A673 (cell line): ENCODE measurements at regions of chr12 and their contacts with region 1.

Region 1: GRCh38 chr12:49776413-49776812 is 35.1 kb downstream of the TMBIM6 start:
- DNase-seq: peak; percentile 77
- H3K4me3 ChIP-seq: no peak overlapping the region
- H3K27ac ChIP-seq: no peak overlapping the region
- H3K4me1 ChIP-seq: peaks cover 5% of the 10 kb centered on the region
- H3K27me3 ChIP-seq: no peaks in the 10 kb centered on the region
- CTCF ChIP-seq: peak; percentile 83

Region 2: GRCh38 chr12:48977315-48978281 is 798.8 kb before region 1 on chr12:
- CTCF ChIA-PET with region 1: no interaction called
- POLR2A ChIA-PET with region 1: no interaction called
- intact Hi-C with region 1: no loop called
- DNase-seq: peak; percentile 71
- H3K4me3 ChIP-seq: peak overlapping the region; percentile 32
- H3K27ac ChIP-seq: no peak overlapping the region
- H3K4me1 ChIP-seq: peaks cover 32% of the 10 kb centered on the region
- H3K27me3 ChIP-seq: peaks cover 69% of the 10 kb centered on the region
- CTCF ChIP-seq: peak; percentile 81

Region 3: DNA sequence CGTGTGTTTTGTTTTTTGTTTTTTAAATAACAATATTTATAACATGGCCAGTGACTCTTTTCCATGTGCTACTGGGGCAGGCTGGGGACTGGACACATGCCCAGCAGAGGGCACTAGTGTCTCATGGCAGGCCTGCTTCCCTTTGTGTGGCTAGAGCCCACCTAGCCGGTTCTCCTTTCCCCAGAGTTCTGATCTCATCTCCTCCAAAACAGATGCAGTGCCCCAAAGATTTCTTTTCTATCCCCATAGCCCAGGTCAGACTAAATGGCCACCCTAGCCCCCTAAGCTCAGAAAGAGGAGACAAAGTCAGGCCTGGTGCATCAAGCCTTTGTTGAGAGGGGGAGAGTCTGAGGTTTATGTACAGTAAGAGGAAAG is 131.8 kb before region 1 on chr12:
- CTCF ChIA-PET with region 1: no interaction called
- POLR2A ChIA-PET with region 1: no interaction called
- intact Hi-C with region 1: loop called (anchors 2 kb)
- DNase-seq: peak; percentile 81
- H3K4me3 ChIP-seq: no peak overlapping the region
- H3K27ac ChIP-seq: no peak overlapping the region
- H3K4me1 ChIP-seq: peaks cover 9% of the 10 kb centered on the region
- H3K27me3 ChIP-seq: no peaks in the 10 kb centered on the region
- CTCF ChIP-seq: peak; percentile 91

Region 4: DNA sequence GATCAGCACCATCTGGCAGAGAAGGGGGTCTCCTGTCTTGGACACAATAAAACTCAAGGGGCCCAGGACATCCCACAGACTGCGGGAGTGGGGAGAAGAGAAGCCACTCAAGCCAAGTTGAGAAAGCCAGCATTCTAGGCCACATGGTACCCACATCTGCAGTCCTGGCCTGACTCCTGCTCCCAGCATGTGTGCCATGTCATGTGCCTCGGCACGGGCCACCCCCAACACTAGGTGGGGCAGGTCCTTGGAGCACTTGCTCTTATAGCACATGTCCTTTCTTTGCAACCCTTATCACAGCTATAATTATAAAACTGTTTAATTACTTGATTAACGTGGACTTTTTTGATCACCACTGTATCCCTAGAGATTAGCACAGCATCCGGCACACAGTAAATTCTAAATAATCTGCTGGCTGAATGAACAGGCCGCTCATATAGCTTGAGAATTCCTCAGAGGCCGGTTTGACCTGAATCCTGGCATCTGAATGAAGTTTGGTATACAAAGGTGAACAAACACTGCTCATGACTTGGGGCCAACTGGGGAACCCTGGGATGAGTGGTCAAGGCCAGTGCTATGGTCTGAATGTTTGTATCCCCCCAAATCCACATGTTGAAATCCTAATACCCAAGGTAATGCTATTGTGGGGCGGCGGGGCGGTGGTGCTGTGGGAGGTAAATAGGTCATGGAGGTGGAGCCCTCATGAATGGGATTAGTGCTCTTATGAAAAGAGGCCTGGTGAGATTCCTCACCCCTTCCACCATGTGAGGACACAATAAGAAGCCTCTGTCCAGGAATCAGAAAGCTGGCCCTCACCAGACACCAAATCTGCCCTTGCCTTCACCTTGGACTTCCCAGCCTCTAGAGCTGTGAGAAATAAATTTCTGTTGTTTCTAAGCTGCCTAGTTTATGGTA is 45.2 kb after region 1 on chr12:
- CTCF ChIA-PET with region 1: no interaction called
- POLR2A ChIA-PET with region 1: no interaction called
- intact Hi-C with region 1: no loop called
- DNase-seq: no peak
- H3K4me3 ChIP-seq: no peak overlapping the region
- H3K27ac ChIP-seq: no peak overlapping the region
- H3K4me1 ChIP-seq: peaks cover 9% of the 10 kb centered on the region
- H3K27me3 ChIP-seq: no peaks in the 10 kb centered on the region
- CTCF ChIP-seq: no peak

Region 5: DNA sequence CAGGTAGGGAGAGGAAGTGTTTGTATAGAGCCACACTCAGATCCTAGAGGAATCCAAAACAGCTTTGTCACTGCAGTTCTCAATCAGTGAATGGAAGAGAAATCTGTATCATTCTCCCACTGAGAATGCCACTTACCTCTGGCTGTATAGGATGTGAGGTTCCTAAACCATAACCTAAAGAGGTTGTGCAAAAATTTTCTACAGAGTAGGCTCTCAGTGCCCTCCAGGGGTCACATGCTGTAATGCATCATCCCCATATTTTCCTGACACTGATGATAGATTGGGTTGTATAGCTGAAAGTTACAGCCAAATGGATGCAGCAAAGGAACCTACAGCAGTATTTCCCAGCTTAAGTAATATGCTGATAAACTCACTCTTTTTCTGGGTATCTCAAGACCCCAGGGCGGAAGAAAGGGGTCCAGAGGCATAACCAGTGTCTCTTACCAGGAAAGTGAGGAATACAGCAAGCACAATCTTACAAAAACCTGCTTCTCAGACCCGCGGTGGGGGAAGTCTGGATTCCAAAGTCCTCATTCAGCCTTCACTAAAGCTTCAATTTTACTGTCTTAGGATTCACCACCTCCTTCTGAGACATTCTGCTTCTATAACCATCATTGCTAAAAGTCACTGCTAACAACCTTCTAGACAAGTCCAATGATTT is 62.7 kb after region 1 on chr12:
- CTCF ChIA-PET with region 1: no interaction called
- POLR2A ChIA-PET with region 1: no interaction called
- intact Hi-C with region 1: loop called (anchors 1 kb)
- DNase-seq: peak; percentile 67
- H3K4me3 ChIP-seq: no peak overlapping the region
- H3K27ac ChIP-seq: no peak overlapping the region
- H3K4me1 ChIP-seq: peaks cover 15% of the 10 kb centered on the region
- H3K27me3 ChIP-seq: no peaks in the 10 kb centered on the region
- CTCF ChIP-seq: peak; percentile 76

Region 6: DNA sequence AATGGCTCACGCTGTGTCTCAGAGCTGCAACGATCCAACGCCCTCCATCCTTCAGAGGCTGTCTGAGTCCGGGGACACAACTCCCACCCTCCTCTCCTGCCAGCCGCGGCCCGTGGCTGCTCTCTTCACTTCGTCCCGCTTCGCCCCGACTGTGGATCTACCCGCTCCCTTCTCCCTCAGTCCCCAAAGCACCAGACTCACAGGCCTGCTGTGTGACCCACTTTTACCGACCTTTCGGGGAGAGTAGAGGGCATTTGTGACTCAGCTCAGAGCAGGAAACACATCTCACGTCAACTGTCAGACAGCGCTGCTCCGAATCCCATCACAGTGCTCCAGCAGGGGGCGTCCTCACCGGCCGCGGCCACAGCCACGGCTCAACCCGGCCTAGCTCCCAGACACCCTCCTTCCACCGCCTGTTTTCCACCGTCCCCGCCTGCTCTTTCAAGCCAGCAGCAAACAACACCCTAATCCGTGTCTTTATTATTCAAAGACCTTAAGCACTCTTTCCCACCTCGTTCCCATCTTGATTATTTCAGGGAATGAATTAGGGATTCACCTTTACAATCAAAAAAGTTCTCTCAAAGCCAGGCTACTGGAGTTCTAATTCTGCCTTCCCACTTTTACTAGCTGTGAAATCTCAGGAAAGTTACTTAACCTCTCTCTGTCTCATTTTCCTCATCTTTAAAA is 169.1 kb after region 1 on chr12:
- CTCF ChIA-PET with region 1: interaction called, 3 read pairs
- POLR2A ChIA-PET with region 1: no interaction called
- intact Hi-C with region 1: loop called (anchors 10 kb)
- DNase-seq: peak; percentile 82
- H3K4me3 ChIP-seq: peak overlapping the region; percentile 30
- H3K27ac ChIP-seq: no peak overlapping the region
- H3K4me1 ChIP-seq: no peaks in the 10 kb centered on the region
- H3K27me3 ChIP-seq: no peaks in the 10 kb centered on the region
- CTCF ChIP-seq: peak; percentile 97

Region 7: DNA sequence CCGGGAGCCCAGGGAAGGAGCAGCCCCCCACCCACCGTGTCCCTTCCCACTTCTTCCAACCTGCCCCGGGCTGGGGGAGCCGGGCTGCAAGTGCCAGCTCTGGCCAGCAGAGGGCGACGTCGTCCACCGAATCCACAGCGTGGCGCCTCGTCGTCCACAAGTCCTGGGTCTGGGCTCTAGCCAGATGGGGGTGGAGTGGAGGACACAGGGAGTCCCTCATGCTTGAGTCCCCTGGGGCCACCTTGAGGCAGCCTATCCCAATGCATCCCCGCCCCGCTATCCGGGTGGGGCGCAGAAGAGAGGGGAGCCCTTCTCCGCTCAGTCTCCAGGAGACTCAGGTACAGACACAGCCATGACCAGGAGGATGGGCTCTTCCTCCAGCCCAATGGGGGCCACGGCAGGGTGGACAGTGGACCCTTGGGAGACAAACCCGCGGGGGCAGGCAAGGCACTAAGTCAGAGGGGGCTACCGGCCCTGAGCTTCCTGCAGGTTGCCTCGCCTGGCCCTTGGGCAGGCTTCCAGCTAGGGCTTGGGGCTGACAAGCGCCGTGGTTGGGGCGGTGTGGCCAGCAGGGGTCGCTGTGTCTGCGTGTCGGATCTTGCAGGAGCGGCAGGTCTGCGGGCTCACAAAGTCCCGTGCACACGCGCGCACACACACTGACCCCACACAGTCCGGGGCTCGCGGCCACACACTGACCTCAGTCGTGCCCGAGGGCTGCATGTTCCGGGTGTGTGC is 190.8 kb after region 1 on chr12:
- CTCF ChIA-PET with region 1: no interaction called
- POLR2A ChIA-PET with region 1: no interaction called
- intact Hi-C with region 1: loop called (anchors 5 kb)
- DNase-seq: peak; percentile 94
- H3K4me3 ChIP-seq: peak overlapping the region; percentile 47
- H3K27ac ChIP-seq: no peak overlapping the region
- H3K4me1 ChIP-seq: no peaks in the 10 kb centered on the region
- H3K27me3 ChIP-seq: peaks cover under 1% of the 10 kb centered on the region
- CTCF ChIP-seq: peak; percentile 80